ENCODE measurements at regions of chr19 and their contacts with region 1.

Region 1: GRCh38 chr19:21851596-21852345 is 15.8 kb upstream of the ZNF43 start:
- DNase-seq: peak; percentile 96 to 97 (median 96)
- ATAC-seq: peak; percentile 100
- H3K4me3 ChIP-seq: peak overlapping the region; percentile 59 to 96 (median 77)
- H3K27ac ChIP-seq: peak overlapping the region in 11 of 12 donors; percentile 35 to 84 (median 80)
- H3K4me1 ChIP-seq: peaks cover 0 to 21% (median 8%) of the 10 kb centered on the region in 12 donors
- H3K27me3 ChIP-seq: peaks cover 0 to 8% (median 0%) of the 10 kb centered on the region in 9 donors
- CTCF ChIP-seq: peak in 1 of 12 donors; percentile 4
- POLR2A ChIP-seq: peak in 1 of 2 donors; percentile 46

Region 2: DNA sequence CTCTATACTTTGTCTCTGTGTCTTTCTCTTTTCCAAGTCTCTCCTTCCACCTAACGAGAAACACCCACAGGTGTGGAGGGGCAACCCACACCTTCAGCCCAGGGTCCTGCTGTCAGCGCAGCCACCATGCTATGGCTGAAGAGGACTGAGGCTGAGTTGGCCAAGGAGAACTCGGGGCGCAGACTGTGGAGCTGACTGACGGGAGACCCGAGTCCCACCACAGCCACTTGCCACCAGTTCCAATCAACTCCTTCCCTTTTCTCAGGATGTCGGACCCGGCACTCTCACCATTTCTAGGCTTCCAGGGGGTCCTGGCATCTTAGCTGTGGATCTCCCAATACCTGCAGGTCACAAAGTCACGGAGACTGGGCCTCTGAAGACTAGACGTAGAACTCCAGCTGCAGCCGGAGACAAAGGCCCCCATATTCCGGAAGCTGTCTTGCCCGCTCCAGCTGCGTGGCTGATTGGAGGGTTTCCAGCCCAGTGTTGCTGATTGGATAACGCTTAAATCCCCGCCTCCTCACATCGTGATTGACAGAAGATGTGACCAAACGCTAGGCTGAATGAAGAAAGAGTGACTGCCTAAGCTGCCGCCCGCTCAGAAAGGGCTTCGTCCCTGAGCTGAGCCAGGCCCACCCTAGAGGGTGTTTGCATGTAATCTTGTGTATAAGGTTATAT is 282.8 kb before region 1 on chr19:
- intact Hi-C with region 1: loop called in 1 of 10 experiments (anchors 5 kb)
- DNase-seq: peak; percentile 91 to 97 (median 92)
- ATAC-seq: peak; percentile 99
- H3K4me3 ChIP-seq: peak overlapping the region; percentile 15 to 79 (median 53)
- H3K27ac ChIP-seq: peak overlapping the region in 10 of 12 donors; percentile 8 to 89 (median 72)
- H3K4me1 ChIP-seq: peaks cover 0 to 31% (median 2%) of the 10 kb centered on the region in 12 donors
- H3K27me3 ChIP-seq: no peaks in the 10 kb centered on the region
- CTCF ChIP-seq: no peak
- POLR2A ChIP-seq: peak in 1 of 2 donors; percentile 32

Region 3: GRCh38 chr19:21767065-21767800 is 84.5 kb before region 1 on chr19 and contains the start of gene ZNF100:
- intact Hi-C with region 1: loop called in 1 of 10 experiments (anchors 5 kb)
- DNase-seq: peak; percentile 93 to 97 (median 95)
- ATAC-seq: peak; percentile 95 to 99 (median 98)
- H3K4me3 ChIP-seq: peak within 1 kb of the TSS; percentile 60 to 95 (median 87)
- H3K27ac ChIP-seq: peak within 1 kb of the TSS; percentile 71 to 90 (median 84)
- H3K4me1 ChIP-seq: peaks cover 0 to 16% (median 6%) of the 10 kb centered on the region in 12 donors
- H3K27me3 ChIP-seq: no peaks in the 10 kb centered on the region
- CTCF ChIP-seq: no peak
- POLR2A ChIP-seq: peak in 1 of 2 donors; percentile 62
- total RNA-seq, gene ZNF100: 1.9 to 8.7 (median 5.5) TPM

Region 4: DNA sequence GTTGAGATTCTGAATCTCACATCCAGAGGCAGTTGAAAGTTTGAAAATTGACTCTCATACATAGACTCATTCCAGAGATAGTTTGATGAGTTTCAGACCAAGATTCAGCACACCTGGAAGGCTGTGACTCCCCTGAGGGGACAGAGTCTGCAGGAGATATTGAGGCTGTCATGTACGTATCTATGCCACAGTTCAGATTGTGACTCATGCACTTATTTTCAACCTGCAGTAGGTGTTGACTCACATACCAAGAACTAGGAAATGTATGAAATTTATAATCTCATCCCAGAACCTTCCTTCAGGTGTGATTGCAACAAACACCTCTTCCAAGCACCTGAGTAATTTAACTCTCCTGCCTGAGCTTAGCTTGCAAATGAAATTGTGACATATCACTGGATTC is 48.6 kb after region 1 on chr19:
- intact Hi-C with region 1: no loop called
- DNase-seq: no peak
- ATAC-seq: no peak
- H3K4me3 ChIP-seq: no peak overlapping the region
- H3K27ac ChIP-seq: no peak overlapping the region
- H3K4me1 ChIP-seq: peaks cover 0 to 9% (median 0%) of the 10 kb centered on the region in 12 donors
- H3K27me3 ChIP-seq: no peaks in the 10 kb centered on the region
- CTCF ChIP-seq: no peak
- POLR2A ChIP-seq: no peak

Region 5: DNA sequence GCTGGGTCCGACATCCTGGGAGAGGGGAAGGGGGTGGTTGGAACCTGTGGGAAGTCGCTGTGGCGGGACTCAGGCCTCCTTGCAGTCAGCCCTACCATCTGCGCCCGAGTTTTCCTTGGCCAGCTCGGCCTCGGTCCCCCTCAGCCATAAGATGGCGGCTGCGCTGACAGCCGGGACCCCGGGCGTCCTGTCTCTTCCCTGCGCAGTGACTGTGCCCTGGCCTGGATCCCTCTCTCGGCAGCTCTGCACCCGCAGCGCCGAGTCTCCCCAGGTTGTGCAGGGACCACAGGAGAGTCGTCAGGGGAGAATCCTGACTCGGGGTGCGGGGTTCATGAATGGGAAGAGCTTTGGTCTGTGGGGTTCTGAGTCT is 200.9 kb after region 1 on chr19:
- intact Hi-C with region 1: loop called in 1 of 10 experiments (anchors 5 kb)
- DNase-seq: peak; percentile 7 to 54 (median 25)
- ATAC-seq: peak in 3 of 4 donors; percentile 55 to 67 (median 65)
- H3K4me3 ChIP-seq: peak overlapping the region; percentile 38 to 91 (median 72)
- H3K27ac ChIP-seq: peak overlapping the region in 6 of 12 donors; percentile 13 to 71 (median 41)
- H3K4me1 ChIP-seq: peaks cover 0 to 9% (median 0%) of the 10 kb centered on the region in 12 donors
- H3K27me3 ChIP-seq: no peaks in the 10 kb centered on the region
- CTCF ChIP-seq: no peak
- POLR2A ChIP-seq: no peak